Naive thymus-derived CD4-positive, alpha-beta T cell (primary cell): ENCODE measurements at regions of chr10 and their contacts with region 1.

Region 1: DNA sequence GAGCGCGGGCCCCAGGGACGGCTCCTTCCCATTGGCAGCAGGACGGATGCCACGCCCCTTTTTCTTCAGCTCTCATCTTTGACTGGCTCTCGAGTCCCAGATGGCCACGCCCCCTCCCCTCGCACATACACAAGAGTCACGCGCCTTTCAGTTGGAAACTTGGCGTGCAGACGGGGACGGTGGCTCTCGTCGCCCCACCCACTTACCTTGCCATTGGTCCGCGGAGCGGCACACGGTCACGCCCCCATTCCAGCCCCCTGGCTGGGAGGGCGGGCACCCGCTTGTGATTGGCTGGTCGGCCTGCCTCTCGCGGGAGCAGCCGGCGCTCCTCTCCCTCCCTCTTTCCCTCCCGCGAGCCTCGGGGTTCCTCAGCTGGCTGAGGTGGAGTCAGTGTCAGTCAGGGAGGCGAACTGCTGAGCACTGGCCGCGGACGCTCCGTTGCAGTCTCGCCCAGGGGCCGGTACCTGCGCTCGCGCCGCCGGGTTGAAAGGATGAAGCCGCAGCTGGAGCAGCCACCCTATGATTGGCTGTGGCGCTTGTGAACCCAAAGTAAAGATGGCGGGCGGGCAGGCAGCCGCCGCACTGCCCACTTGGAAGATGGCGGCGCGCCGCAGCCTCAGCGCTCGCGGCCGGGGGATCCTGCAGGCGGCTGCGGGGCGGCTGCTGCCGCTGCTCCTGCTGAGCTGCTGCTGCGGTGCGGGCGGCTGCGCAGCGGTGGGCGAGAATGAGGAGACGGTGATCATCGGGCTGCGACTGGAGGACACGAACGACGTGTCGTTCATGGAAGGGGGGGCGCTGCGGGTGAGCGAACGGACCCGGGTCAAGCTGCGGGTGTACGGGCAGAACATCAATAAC is at the start of gene CNNM2:
- DNase-seq: peak; percentile 95 to 100 (median 99)
- ATAC-seq: peak; percentile 95
- H3K4me3 ChIP-seq: peak within 1 kb of the TSS; percentile 98
- H3K4me3 Mint-ChIP-seq: peak within 1 kb of the TSS; percentile 94 to 99 (median 96)
- H3K27ac ChIP-seq: peak within 1 kb of the TSS; percentile 83
- H3K27ac Mint-ChIP-seq: peak within 1 kb of the TSS; percentile 82 to 97 (median 94)
- H3K4me1 ChIP-seq: peaks cover 34 to 35% of the 10 kb centered on the region in 2 donors
- H3K4me1 Mint-ChIP-seq: peaks cover 41 to 68% (median 56%) of the 10 kb centered on the region in 7 donors
- H3K27me3 ChIP-seq: no peaks in the 10 kb centered on the region
- H3K27me3 Mint-ChIP-seq: peaks cover 0 to 14% (median 5%) of the 10 kb centered on the region in 5 donors
- total RNA-seq, gene CNNM2: 9.3 to 17.5 (median 12.0) TPM

Region 2: DNA sequence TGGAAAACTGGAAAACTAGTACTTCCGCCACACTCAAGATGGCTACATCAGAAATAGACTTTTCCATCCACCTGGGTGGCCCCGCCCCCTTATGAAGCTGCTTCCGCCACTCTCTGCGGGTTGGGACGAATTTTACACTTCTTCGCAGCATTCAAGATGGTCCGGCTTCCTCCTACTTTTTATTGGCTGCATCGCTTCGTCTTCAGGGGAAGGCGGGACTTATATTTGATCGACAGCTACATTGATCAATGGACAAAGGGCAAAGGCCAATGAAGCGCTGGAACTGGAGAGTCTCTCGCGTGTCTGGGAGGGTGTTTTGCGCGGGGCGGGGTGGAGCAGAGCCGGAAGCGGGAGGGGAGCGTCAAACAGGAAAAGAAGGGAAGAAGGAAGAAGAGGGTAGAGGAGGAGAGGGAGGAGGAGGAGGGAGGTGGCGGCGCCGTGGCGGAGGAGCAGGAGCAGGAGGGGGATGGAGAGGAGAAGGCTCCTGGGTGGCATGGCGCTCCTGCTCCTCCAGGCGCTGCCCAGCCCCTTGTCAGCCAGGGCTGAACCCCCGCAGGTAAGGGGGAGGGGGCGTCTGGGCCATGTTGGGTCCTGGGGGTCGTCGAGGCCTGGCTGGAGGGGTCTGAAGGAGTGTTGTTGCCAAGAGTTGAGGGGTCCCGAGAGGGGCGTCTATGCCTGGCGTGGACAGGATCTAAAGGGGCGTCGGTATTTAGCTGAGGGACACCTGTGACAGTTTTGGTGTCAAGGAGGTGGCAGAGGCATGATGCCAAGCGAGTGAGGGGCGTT is 174.4 kb before region 1 on chr10 and contains the start of gene WBP1L:
- CTCF ChIA-PET with region 1: no interaction called
- POLR2A ChIA-PET with region 1: no interaction called
- intact Hi-C with region 1: loop called (anchors 1 kb)
- DNase-seq: peak; percentile 77 to 98 (median 96)
- ATAC-seq: peak; percentile 98
- H3K4me3 ChIP-seq: peak within 1 kb of the TSS; percentile 85
- H3K4me3 Mint-ChIP-seq: peak within 1 kb of the TSS; percentile 80 to 97 (median 93)
- H3K27ac ChIP-seq: peak within 1 kb of the TSS; percentile 77
- H3K27ac Mint-ChIP-seq: peak within 1 kb of the TSS; percentile 57 to 96 (median 90)
- H3K4me1 ChIP-seq: peaks cover 17 to 25% of the 10 kb centered on the region in 2 donors
- H3K4me1 Mint-ChIP-seq: peaks cover 33 to 59% (median 48%) of the 10 kb centered on the region in 7 donors
- H3K27me3 ChIP-seq: no peaks in the 10 kb centered on the region
- H3K27me3 Mint-ChIP-seq: no peaks in the 10 kb centered on the region
- total RNA-seq, gene WBP1L: 20.5 to 37.9 (median 34.1) TPM

Region 3: DNA sequence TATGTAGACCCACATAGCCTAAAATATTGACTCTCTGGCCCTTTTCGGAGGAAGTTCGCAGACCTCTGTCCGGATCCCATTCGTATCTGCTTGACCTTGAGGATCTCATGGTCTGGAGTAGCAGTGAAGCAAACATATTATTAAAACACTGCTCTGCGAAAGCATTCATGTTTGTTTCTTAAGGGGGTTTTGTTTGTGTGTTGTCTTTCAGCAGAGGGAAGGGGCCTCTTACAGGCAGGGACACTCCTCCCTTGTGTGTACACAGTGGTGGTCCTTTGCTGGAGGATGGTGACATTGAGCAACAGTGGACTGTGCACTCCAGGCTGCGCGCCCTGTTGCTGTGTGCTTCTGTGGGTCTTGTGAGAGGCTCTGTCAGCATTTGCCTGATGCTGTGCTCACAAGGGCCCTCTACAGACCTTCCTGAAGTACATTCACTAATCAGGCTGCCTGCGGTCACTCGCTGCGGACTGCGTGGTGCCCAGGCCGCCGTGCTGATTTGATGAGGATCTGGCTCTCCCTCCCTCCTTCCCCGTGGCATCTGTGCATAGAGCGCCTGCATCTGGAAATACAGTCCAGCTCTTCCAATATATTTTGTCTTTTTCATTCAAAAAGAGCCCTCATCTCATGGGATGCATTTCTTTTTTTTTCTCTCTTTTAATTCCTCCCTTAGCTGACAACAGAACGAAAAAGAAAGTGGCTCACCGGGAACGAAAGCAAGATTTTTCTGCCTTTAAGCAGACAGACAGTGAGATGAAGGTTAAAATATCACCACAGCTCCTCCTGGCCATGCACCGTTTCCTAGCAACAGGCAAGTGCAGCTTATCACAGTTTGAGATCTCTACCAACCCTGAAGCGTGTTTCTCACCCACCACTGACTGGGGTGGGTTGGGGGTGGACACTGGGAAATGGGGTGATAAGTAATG is 135.7 kb after region 1 on chr10:
- CTCF ChIA-PET with region 1: interaction called, 3 read pairs
- POLR2A ChIA-PET with region 1: no interaction called
- intact Hi-C with region 1: loop called (anchors 1 kb)
- DNase-seq: peak in 8 of 9 donors; percentile 42 to 74 (median 58)
- ATAC-seq: peak; percentile 93
- H3K4me3 ChIP-seq: peak overlapping the region; percentile 37
- H3K4me3 Mint-ChIP-seq: peak overlapping the region; percentile 74 to 88 (median 84)
- H3K27ac ChIP-seq: peak overlapping the region; percentile 46
- H3K27ac Mint-ChIP-seq: peak overlapping the region; percentile 85 to 96 (median 90)
- H3K4me1 ChIP-seq: peaks cover 6 to 15% of the 10 kb centered on the region in 2 donors
- H3K4me1 Mint-ChIP-seq: peaks cover 13 to 21% (median 18%) of the 10 kb centered on the region in 7 donors
- H3K27me3 ChIP-seq: no peaks in the 10 kb centered on the region
- H3K27me3 Mint-ChIP-seq: no peaks in the 10 kb centered on the region

Region 4: GRCh38 chr10:103244663-103245271 is 326.6 kb after region 1 on chr10:
- CTCF ChIA-PET with region 1: interaction called, 13 read pairs
- POLR2A ChIA-PET with region 1: interaction called, 3 read pairs
- intact Hi-C with region 1: loop called in 1 of 2 experiments (anchors 1 kb)
- DNase-seq: peak; percentile 31 to 67 (median 52)
- ATAC-seq: peak; percentile 79
- H3K4me3 ChIP-seq: no peak overlapping the region
- H3K4me3 Mint-ChIP-seq: no peak overlapping the region
- H3K27ac ChIP-seq: no peak overlapping the region
- H3K27ac Mint-ChIP-seq: no peak overlapping the region
- H3K4me1 ChIP-seq: no peaks in the 10 kb centered on the region
- H3K4me1 Mint-ChIP-seq: peaks cover 3 to 28% (median 6%) of the 10 kb centered on the region in 7 donors
- H3K27me3 ChIP-seq: no peaks in the 10 kb centered on the region
- H3K27me3 Mint-ChIP-seq: peaks cover 0 to 13% (median 7%) of the 10 kb centered on the region in 5 donors

Region 5: DNA sequence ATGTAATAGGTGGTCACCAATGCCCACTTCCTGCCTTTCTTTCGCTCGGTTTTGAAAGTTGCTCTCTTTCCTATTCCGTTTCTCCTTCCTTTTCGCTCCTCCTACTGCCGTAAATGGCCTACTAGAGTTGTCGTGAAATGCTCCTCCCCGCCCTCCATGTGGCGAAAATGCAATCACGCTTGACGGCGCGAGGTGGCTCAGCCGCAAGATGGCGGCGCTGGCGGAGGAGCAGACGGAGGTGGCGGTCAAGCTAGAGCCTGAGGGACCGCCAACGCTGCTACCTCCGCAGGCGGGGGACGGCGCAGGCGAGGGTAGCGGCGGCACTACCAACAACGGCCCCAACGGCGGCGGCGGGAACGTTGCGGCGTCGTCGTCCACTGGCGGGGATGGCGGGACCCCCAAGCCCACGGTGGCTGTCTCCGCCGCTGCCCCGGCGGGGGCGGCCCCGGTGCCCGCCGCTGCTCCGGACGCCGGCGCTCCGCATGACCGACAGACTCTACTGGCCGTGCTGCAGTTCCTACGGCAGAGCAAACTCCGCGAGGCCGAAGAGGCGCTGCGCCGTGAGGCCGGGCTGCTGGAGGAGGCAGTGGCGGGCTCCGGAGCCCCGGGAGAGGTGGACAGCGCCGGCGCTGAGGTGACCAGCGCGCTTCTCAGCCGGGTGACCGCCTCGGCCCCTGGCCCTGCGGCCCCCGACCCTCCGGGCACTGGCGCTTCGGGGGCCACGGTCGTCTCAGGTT is 449.8 kb after region 1 on chr10 and contains the start of gene TAF5:
- CTCF ChIA-PET with region 1: no interaction called
- POLR2A ChIA-PET with region 1: interaction called, 3 read pairs
- intact Hi-C with region 1: loop called (anchors 1 to 5 kb)
- DNase-seq: peak; percentile 70 to 94 (median 90)
- ATAC-seq: peak; percentile 88
- H3K4me3 ChIP-seq: peak within 1 kb of the TSS; percentile 58
- H3K4me3 Mint-ChIP-seq: peak within 1 kb of the TSS; percentile 92 to 99 (median 96)
- H3K27ac ChIP-seq: peak within 1 kb of the TSS; percentile 77
- H3K27ac Mint-ChIP-seq: peak within 1 kb of the TSS; percentile 84 to 98 (median 94)
- H3K4me1 ChIP-seq: peaks cover 4 to 11% of the 10 kb centered on the region in 2 donors
- H3K4me1 Mint-ChIP-seq: peaks cover 0 to 35% (median 23%) of the 10 kb centered on the region in 7 donors
- H3K27me3 ChIP-seq: no peaks in the 10 kb centered on the region
- H3K27me3 Mint-ChIP-seq: no peaks in the 10 kb centered on the region
- total RNA-seq, gene TAF5: 4.7 to 8.9 (median 7.1) TPM

Region 6: GRCh38 chr10:103491493-103492381 is 573.5 kb after region 1 on chr10:
- CTCF ChIA-PET with region 1: no interaction called
- POLR2A ChIA-PET with region 1: no interaction called
- intact Hi-C with region 1: loop called in 1 of 2 experiments (anchors 5 kb)
- DNase-seq: no peak
- ATAC-seq: no peak
- H3K4me3 ChIP-seq: no peak overlapping the region
- H3K4me3 Mint-ChIP-seq: peak overlapping the region in 6 of 10 donors; percentile 18 to 86 (median 81)
- H3K27ac ChIP-seq: no peak overlapping the region
- H3K27ac Mint-ChIP-seq: no peak overlapping the region
- H3K4me1 ChIP-seq: peaks cover 0 to 12% of the 10 kb centered on the region in 2 donors
- H3K4me1 Mint-ChIP-seq: peaks cover 0 to 18% (median 15%) of the 10 kb centered on the region in 7 donors
- H3K27me3 ChIP-seq: no peaks in the 10 kb centered on the region
- H3K27me3 Mint-ChIP-seq: peaks cover 25 to 45% (median 34%) of the 10 kb centered on the region in 5 donors